H1 (cell line): ENCODE measurements at regions of chr15 and their contacts with region 1.

Region 1: GRCh38 chr15:89378296-89379151 is 43.9 kb upstream of the POLG start:
- DNase-seq: peak in 1 of 2 experiments; percentile 74
- H3K4me3 ChIP-seq: peak overlapping the region; percentile 32 to 55 (median 41)
- H3K27ac ChIP-seq: no peak overlapping the region
- H3K4me1 ChIP-seq: peaks cover 18 to 37% (median 30%) of the 10 kb centered on the region in 4 experiments
- H3K27me3 ChIP-seq: peaks cover 92 to 100% (median 98%) of the 10 kb centered on the region in 4 experiments
- CTCF ChIP-seq: no peak
- EP300 ChIP-seq: no peak
- POLR2A ChIP-seq: no peak
- RAD21 ChIP-seq: no peak

Region 2: GRCh38 chr15:89299896-89300295 is 78.6 kb before region 1 on chr15:
- CTCF ChIA-PET with region 1: no interaction called
- POLR2A ChIA-PET with region 1: no interaction called
- DNase-seq: no peak
- H3K4me3 ChIP-seq: no peak overlapping the region
- H3K27ac ChIP-seq: no peak overlapping the region
- H3K4me1 ChIP-seq: no peaks in the 10 kb centered on the region
- H3K27me3 ChIP-seq: no peaks in the 10 kb centered on the region
- CTCF ChIP-seq: no peak
- EP300 ChIP-seq: no peak
- POLR2A ChIP-seq: no peak
- RAD21 ChIP-seq: peak in 1 of 2 experiments; percentile 19; a peak in 2 of 4 replicates

Region 3: DNA sequence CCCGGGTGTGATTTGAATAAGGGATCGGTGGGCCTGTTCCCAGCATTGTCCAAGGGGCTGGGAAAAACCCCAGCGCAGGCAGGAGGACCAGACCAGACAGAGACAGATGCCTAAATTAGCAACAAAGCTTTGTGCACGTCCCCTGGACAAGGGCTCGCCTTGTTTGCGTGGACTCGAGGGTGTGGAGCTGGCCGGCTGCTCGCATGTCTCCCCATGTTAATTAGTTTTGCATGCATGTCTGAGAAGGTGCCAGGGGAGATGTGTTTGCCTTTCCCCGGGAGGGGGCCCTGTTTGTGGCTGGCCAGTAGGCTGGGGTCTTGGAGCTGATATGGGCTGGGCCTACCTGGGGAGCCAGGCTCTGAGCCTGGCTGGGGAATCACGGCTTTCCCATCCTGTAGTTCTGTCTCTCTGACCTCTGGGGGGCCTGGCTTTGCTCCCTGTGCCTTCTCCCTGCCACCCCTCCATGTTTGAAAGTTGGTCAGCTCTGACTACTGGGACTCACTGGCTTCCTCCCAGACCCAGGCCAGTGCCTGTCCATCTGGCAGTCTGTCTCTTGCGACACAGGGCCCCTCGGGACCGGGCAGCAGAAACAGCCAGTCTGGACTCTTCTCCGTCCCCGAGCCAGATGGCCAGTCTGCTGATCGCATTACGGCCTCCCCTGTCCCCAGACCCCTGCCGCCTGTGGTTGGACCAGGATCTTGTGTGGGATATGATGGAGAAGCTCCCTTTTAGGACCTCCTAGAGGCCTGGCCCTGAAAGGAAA is 11.5 kb after region 1 on chr15:
- CTCF ChIA-PET with region 1: no interaction called
- POLR2A ChIA-PET with region 1: interaction called, 28 read pairs
- DNase-seq: no peak
- H3K4me3 ChIP-seq: 0 out of 8 replicates have a peak overlapping the region, but pooled peaks of 1 of the 4 experiments have one; percentile 10
- H3K27ac ChIP-seq: no peak overlapping the region
- H3K4me1 ChIP-seq: peaks cover 0 to 20% (median 13%) of the 10 kb centered on the region in 4 experiments; a peak in 6 of 7 replicates
- H3K27me3 ChIP-seq: peaks cover 35 to 93% (median 77%) of the 10 kb centered on the region in 4 experiments
- CTCF ChIP-seq: peak in 1 of 3 experiments; percentile 13; a peak in 1 of 4 replicates
- EP300 ChIP-seq: no peak
- POLR2A ChIP-seq: no peak
- RAD21 ChIP-seq: no peak

Region 4: DNA sequence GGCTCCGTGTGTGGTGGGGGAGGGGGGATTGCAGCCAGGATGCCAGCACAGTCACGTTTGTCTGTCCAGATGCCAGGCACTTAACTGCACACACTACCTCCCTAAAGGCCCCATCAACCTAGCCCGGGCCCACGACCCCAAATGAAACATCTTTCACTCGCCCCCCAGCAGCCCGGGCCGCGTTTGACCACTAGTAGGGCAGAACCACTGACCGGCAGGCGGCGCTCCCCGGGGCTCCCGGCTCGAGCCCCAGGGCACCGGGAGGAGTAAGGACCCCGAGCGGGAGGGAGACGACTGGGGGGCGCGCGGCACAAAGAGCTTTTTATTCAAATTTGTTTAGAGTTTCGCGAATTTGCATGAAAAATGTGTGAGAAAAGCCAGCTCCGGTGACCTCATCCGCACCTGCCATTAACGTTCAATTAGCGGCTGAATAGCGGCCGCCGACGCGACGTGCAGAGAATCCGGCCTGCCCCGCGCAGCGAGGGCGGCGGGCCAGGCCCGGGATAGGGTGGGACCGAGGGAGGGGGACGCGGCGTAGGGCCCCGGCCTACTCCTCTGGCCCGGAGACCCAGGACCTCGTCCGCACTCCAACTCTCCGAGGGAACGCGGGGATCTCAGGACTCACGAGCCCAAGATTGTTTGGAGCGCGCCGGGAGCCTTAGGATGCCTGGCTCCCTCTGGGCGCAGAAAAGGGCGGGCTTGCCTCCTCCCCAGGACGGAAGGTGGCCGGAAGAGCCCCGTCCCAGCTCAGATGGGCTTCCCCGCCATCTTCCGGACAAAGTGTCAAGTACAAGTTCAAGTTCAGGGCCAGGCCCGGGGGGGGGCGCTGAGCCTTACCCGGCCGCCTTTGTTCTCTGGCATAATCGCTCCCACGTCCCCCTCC is 21.0 kb after region 1 on chr15:
- CTCF ChIA-PET with region 1: no interaction called
- POLR2A ChIA-PET with region 1: interaction called, 28 read pairs
- DNase-seq: no peak
- H3K4me3 ChIP-seq: peak overlapping the region in 3 of 4 experiments; percentile 28 to 54 (median 33); a peak in 5 of 8 replicates
- H3K27ac ChIP-seq: no peak overlapping the region
- H3K4me1 ChIP-seq: peaks cover 5 to 45% (median 19%) of the 10 kb centered on the region in 4 experiments
- H3K27me3 ChIP-seq: peaks cover 93 to 99% (median 99%) of the 10 kb centered on the region in 4 experiments
- CTCF ChIP-seq: peak; percentile 52 to 74 (median 67)
- EP300 ChIP-seq: no peak
- POLR2A ChIP-seq: no peak
- RAD21 ChIP-seq: peak in 1 of 2 experiments; percentile 34; a peak in 2 of 4 replicates